ENCODE measurements at regions of chr1 and their contacts with region 1.

Region 1: DNA sequence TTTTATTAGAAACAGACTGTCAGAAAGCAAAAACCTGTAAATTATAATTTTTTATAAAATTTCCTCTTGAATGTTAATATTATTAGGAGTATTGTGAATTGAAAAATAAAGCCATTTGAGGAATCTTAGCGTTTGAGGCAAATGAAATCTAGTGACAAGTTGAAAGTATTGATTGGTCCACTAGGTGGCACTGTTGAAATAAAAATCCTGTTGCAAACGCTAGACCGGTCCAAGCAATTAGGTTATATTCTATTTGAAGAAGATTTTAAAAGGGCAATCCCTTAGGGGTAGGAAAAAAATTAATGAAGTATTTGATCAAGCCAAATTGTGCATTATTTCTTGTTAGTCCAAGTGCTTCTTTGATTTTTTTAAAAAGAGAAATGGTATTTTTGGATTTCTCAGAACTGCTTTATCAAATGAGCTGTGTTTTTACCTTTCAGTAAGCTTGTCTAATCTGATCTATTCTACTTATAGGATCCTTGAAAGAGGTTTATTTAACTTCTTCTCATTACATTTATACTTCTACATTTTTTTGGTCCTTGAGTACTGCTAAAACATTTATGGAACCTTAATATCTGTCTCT is 57.7 kb downstream of the ATG4C start:
- DNase-seq: no peak
- H3K4me3 ChIP-seq: no peak overlapping the region
- H3K27ac ChIP-seq: no peak overlapping the region
- H3K4me1 ChIP-seq: peaks cover 0 to 6% (median 1%) of the 10 kb centered on the region in 6 donors
- H3K27me3 ChIP-seq: no peaks in the 10 kb centered on the region
- CTCF ChIP-seq: peak in 10 of 11 experiments; percentile 27 to 77 (median 60)
- POLR2A ChIP-seq: no peak

Region 2: GRCh38 chr1:63148825-63149645 is 307.4 kb after region 1 on chr1:
- intact Hi-C with region 1: loop called (anchors 5 kb)
- DNase-seq: no peak
- H3K4me3 ChIP-seq: no peak overlapping the region
- H3K27ac ChIP-seq: no peak overlapping the region
- H3K4me1 ChIP-seq: no peaks in the 10 kb centered on the region
- H3K27me3 ChIP-seq: peaks cover 0 to 34% (median 4%) of the 10 kb centered on the region in 7 donors
- CTCF ChIP-seq: peak in 8 of 11 experiments; percentile 16 to 51 (median 33)
- POLR2A ChIP-seq: no peak